Ascending aorta (tissue), 2 donors: ENCODE measurements at regions of chr15 and their contacts with region 1.

Region 1: DNA sequence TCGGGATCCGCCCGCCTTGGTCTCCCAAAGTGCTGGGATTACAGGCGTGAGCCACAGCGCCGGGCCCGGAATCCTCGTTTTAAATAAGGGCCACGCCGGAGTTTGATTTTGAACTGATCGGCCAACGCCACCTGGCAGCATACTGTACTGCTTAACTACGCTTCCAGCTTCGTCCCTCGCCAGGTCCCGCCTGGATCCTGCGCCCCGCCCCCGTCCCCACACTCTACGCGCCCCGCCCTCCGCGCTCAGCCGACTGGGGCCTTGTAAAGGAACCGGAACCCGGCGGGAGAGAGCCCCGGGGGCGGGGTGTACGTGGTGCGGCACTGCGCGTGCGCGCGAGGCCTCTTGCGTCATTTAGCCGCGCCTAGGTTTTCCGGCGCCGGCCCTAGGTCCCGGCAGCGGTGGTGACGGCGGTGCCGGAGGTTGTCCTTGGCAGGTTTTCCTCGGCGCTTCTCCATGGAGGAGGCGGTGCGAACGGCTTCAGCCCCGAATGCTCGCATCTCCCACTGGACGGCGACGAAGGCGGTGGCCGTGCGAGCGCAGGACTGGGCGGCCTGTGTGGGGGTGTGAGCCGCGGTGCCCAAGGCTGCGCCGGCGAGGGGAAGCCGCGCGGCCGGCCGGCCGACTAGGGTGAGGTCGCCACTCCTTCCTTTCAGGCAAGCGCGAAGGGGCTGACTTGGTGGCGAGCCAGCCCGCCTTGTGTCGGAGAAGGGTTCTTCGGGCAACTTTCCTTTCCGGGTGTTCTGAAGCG is at the start of gene NIPA2:
- DNase-seq: peak; percentile 94 to 99
- H3K4me3 ChIP-seq: peak within 1 kb of the TSS; percentile 78 to 79
- H3K27ac ChIP-seq: peak within 1 kb of the TSS; percentile 92 to 93
- H3K4me1 ChIP-seq: peaks cover 8 to 10% of the 10 kb centered on the region in 2 donors
- H3K27me3 ChIP-seq: no peaks in the 10 kb centered on the region
- CTCF ChIP-seq: peak in 2 of 3 experiments; percentile 3 to 28
- total RNA-seq, gene NIPA2: 13.5 TPM

Region 2: DNA sequence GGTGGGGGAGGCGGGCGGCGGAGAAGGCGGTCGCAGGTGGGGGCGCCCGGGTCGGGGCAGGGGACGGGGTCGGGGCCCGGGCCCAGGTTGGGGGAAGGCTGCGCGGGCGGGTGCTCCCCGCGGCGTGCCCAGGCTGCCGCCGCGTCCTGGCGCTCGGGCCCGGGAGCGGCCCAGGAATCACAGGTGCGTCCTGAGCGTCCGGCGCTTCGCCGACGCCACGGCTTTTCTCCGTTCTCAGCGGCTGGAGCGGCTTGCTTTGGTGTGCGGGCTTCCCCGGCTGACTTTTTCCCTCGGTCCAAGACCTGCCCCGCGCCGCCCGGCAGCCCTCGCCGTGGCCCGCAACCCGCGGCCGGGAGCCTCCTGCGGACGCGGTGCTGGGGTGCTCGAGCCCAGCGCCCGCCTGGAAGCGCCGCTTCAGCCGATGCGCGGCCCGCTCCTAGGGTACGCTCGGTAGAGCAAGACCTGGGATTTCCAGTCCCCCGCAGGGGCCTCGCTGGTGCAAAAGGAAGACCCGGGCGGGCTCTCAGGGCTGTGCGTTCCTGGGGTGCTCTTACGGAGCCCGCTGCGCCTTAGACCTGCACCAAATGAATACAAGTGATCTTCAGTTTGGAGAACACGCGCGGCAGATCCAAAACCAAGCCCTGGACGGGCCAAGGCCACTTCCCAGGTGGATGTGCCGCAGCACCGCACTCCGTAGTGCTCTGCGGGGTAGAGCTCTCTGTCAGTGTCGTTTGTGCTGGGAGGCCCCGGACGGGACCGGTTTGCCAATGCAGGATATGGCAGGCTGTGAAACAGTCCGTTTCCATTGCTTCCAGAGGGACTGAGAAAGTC is 51.4 kb before region 1 on chr15:
- intact Hi-C with region 1: loop called (anchors 1 kb)
- DNase-seq: no peak
- H3K4me3 ChIP-seq: peak overlapping the region; percentile 79 to 90
- H3K27ac ChIP-seq: peak overlapping the region; percentile 75 to 91
- H3K4me1 ChIP-seq: peaks cover 0 to 3% of the 10 kb centered on the region in 2 donors
- H3K27me3 ChIP-seq: no peaks in the 10 kb centered on the region
- CTCF ChIP-seq: no peak

Region 3: DNA sequence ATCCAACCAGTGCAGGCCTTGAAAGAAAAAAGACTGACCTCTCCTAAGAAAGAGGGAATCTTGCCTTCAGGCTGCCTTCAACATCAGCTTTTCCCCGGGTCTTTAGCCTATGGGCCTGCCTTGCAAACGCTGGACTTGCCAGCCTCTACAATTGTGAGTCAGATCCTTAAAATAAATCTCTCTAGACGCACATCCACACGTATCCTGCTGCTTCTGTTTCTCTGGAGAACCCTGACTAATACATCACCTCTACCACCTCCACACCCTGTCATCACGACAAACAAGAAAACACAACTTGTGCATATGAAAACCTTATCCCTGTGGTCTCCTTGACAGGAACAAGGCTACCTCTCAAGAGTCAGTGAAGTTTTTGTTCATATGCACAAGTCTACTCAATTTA is 129.9 kb after region 1 on chr15:
- intact Hi-C with region 1: loop called (anchors 10 kb)
- DNase-seq: no peak
- H3K4me3 ChIP-seq: no peak overlapping the region
- H3K27ac ChIP-seq: peak overlapping the region; percentile 75 to 88
- H3K4me1 ChIP-seq: peaks cover 10 to 25% of the 10 kb centered on the region in 2 donors
- H3K27me3 ChIP-seq: no peaks in the 10 kb centered on the region
- CTCF ChIP-seq: no peak

Region 4: DNA sequence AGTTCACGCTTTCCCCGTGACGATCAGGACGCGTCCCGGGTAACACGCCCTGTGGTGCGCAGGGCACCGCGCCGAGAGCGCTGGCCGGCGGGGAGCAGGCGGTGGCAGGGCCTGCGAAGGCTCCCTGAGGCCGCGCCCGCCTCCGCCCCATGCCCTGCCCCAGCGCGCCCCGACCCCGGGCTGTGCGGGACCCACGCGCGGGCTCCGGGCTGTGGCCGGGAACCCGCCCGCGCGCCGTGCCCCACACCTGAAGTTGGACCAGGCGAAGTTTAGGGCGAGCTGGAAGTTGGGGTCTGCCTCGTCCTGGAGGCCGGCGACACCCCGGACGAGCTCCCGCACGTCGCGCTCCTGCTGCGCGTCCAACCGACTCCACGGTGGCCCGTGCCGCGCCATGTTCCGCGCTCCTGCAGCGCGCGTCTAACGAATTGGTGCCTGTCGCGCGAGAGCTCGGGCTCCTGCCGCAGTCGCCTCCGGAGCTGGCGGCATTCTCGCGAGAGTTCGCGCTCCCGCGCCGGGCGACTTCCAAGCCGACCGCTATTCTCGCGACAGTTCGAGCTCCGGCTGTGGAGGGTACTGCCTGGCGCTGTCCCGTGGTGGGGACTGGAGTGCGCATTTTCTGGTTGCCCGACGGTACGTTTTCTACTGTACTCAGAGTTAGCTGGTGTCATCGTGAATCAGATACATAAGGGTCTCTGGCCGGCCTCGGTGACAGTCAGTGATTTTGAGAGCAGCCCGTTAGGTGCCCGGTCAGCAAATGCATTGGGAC is 200.9 kb after region 1 on chr15 and contains the start of gene TUBGCP5:
- intact Hi-C with region 1: loop called (anchors 2 kb)
- DNase-seq: peak; percentile 91 to 99
- H3K4me3 ChIP-seq: peak within 1 kb of the TSS; percentile 75 to 85
- H3K27ac ChIP-seq: peak within 1 kb of the TSS; percentile 68 to 76
- H3K4me1 ChIP-seq: peaks cover 0 to 8% of the 10 kb centered on the region in 2 donors
- H3K27me3 ChIP-seq: no peaks in the 10 kb centered on the region
- CTCF ChIP-seq: peak in 2 of 3 experiments; percentile 46 to 51
- total RNA-seq, gene TUBGCP5: 17.1 TPM